ENCODE measurements at regions of chr15 and their contacts with region 1.

Region 1: DNA sequence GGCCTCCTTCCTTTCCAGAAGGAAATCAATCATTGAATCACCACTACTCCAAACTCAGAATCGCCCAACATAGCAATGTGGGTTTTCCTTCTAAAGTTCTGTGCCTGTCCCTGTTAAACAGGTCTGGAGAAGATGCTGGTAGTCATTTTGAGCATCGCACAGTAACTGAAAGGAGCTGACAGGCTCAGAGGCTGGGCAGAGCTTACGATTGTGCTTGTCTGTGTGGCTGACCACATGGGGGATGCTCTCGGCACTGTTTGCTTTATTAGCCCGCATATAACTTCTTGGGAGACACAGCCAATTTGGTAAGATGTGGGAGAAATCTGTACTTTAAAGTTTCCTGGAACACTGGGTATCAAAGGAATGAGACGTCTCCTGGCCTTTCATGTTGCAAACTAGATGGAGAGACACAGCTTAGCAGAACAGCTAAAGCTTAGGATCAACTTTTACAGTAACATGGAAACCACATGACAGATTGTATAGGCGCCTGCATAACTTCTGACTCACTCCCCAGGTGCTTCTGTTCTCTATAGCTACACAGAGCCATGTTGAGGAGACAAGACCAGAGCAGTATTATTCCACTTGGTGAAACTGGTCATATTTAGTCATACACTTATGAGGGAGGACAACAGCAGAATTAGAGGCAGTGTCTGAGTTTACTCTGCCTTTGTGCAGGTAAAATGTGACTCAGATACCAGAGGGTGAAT is 374.1 kb downstream of the RORA start:
- DNase-seq: no peak
- H3K4me3 ChIP-seq: no peak overlapping the region
- H3K27ac ChIP-seq: no peak overlapping the region
- H3K4me1 ChIP-seq: no peaks in the 10 kb centered on the region
- H3K27me3 ChIP-seq: no peaks in the 10 kb centered on the region
- CTCF ChIP-seq: no peak
- POLR2A ChIP-seq: no peak

Region 2: DNA sequence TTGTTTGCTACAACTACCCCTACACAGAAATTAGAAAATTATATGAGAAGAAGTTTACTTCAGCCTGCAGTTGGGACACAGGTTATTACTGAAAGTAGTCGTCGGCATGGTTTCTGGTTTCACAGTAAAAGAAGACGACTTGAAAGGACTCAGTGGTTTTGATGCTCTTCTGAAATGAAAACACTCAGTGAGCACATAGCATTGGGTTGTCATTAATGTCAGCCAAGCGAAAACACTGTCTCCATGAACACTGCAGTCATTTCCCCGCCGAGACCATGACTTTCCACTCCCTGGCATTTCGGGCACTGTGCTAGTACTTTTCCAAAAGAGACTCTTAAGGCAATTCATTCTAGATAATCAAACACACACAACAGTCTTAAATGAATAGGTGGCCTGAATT is 306.9 kb before region 1 on chr15:
- intact Hi-C with region 1: no loop called
- DNase-seq: peak; percentile 10 to 14
- H3K4me3 ChIP-seq: no peak overlapping the region
- H3K27ac ChIP-seq: no peak overlapping the region
- H3K4me1 ChIP-seq: peaks cover 0 to 8% of the 10 kb centered on the region in 2 donors
- H3K27me3 ChIP-seq: no peaks in the 10 kb centered on the region
- CTCF ChIP-seq: no peak
- POLR2A ChIP-seq: no peak

Region 3: DNA sequence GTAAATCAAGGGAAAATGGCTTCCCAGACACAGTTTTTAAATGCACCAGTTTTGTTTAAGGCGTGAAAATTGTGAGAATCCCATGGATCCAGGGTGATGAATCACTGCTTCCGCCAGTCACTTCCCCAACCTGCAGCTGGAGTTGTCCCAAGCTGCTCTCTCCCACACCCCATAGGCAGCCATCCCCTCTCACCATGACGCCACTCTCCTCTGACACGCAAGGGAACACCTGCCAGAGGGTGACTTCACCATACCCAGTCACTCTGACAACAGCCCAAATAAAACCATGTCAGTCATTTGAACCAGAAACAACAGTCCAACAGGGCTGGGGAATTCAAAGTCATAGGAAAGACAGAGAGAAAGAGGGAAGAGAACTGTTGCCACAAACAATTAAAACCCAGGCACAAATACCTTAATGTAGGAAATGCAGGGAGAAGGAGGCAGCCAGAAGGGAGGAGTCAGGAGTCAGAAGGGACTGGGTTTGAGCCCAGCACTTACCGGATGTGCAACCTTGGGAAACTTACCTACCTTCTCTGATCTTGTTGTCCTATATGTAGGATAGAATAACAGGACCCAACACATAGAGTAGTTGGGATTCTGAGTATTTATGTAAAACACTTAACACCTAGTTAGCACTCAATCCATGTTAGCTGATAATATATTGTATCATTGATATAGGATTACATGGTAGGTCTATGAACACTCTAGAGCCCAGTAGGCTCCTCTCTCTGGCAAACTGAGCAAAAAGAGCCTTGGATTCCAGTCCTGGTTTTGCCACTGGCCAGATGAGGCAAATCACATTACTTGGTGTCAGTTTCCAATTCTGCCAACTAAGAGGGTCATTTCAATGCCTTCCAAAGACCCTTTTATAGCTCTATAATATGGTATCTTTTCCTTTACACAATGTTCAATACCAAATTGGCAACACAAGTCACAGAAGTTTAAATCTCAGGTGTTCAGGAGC is 49.7 kb before region 1 on chr15:
- intact Hi-C with region 1: loop called (anchors 5 kb)
- DNase-seq: peak; percentile 16 to 32
- H3K4me3 ChIP-seq: no peak overlapping the region
- H3K27ac ChIP-seq: no peak overlapping the region
- H3K4me1 ChIP-seq: peaks cover 0 to 4% of the 10 kb centered on the region in 2 donors
- H3K27me3 ChIP-seq: no peaks in the 10 kb centered on the region
- CTCF ChIP-seq: no peak
- POLR2A ChIP-seq: no peak

Region 4: DNA sequence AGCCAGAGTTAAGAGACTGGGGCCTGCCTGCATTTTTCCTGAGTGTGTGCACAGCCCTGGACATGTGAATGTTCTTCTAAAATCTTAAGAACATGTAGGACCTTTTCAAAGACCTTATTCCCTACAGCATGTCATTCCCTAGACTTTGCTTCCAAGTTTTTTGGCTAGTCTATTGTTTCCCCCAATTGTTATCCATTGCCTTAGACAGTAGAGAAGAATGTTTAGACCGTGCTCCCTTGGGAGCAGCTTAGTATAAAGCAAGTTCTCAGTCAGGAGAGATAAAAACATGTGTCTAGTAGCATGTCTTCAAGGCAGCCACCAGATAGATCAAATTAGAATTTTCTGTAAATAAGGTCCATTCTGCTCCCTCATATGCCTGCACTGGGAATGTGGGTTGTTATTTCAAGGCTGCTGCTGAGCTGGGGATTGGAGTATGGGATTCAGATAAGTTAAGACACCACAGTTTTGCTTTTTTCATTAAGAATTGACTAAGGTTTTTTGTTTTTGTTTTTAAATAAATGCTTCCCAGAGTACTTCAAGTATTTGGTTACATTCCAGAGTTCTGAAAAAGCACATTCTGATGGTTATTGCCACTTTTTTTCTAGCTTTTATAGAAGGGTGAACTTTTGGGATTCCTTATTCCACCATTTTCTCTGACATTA is 127.4 kb after region 1 on chr15:
- intact Hi-C with region 1: no loop called
- DNase-seq: no peak
- H3K4me3 ChIP-seq: no peak overlapping the region
- H3K27ac ChIP-seq: no peak overlapping the region
- H3K4me1 ChIP-seq: peaks cover 0 to 17% of the 10 kb centered on the region in 2 donors
- H3K27me3 ChIP-seq: no peaks in the 10 kb centered on the region
- CTCF ChIP-seq: no peak
- POLR2A ChIP-seq: no peak

Measured in thyroid gland (tissue), 4 donors.